Activated T-helper 1 cell treated with anti-CD3 and anti-CD28 coated beads, Interleukin-12 subunit alpha, Interleukin-12 subunit beta, Interleukin-2, Interleukin-4 antibody, amounts not matched to agents 30 ng/mL and 10 ng/mL and 1 ng/mL, durations not matched to agents 14 hours and 24 hours and 36 hours (primary cell): ENCODE measurements at regions of chrX and their contacts with region 1.

Region 1: GRCh38 chrX:53422086-53422860 is at the start of gene SMC1A:
- DNase-seq: peak; percentile 93
- H3K4me3 Mint-ChIP-seq: peak within 1 kb of the TSS; percentile 97
- H3K27ac Mint-ChIP-seq: peak within 1 kb of the TSS; percentile 95
- H3K4me1 Mint-ChIP-seq: peaks cover 35% of the 10 kb centered on the region
- H3K27me3 Mint-ChIP-seq: no peaks in the 10 kb centered on the region
- total RNA-seq, gene SMC1A: 122 and 138 TPM in 2 replicates

Region 2: DNA sequence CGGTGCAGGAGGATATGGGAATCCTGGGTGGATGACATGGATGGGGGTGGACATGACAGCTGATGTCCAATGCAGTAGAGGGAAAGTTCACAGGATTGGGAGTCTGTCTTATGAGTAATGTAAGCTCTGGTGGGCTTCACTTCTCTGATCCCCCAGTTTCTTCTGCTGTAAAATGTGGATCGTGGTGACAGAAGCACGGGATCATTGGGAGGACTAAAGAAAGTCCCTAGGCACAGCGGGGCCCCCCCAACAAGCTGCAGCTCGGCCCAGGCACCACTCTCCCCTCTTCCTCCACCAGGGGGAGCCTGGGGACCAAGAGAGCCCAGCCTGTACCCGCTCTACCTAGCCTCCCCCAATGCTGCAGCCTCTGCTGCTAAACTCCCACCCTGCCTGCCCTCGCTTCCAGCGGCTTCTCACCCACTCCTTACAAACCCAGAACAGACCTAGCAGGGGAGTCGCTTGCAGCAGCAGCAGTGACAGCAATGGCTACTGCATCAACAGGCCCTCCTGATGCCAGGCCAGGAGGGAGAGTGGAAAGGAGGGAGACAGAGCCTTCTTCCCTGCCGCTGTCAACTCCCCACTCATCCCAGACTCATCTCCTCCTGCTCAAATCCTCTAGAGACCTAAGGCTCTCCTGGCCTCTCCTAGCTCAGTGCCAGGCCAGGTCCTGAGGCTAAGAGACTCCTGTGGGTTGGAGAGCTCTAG is 104.8 kb before region 1 on chrX:
- intact Hi-C with region 1: no loop called
- DNase-seq: peak; percentile 30
- H3K4me3 Mint-ChIP-seq: no peak overlapping the region
- H3K27ac Mint-ChIP-seq: no peak overlapping the region
- H3K4me1 Mint-ChIP-seq: peaks cover 17% of the 10 kb centered on the region
- H3K27me3 Mint-ChIP-seq: peaks cover 34% of the 10 kb centered on the region

Region 3: GRCh38 chrX:53433651-53434639 is 11.7 kb after region 1 on chrX and contains the start of gene HSD17B10:
- intact Hi-C with region 1: loop called (anchors 1 kb)
- DNase-seq: peak; percentile 85
- H3K4me3 Mint-ChIP-seq: peak within 1 kb of the TSS; percentile 90
- H3K27ac Mint-ChIP-seq: peak within 1 kb of the TSS; percentile 80
- H3K4me1 Mint-ChIP-seq: peaks cover 24% of the 10 kb centered on the region
- H3K27me3 Mint-ChIP-seq: no peaks in the 10 kb centered on the region
- total RNA-seq, gene HSD17B10: 158 and 161 TPM in 2 replicates